ENCODE measurements at regions of chr2 and their contacts with region 1.

Region 1: GRCh38 chr2:190648289-190649034 is 421 bp upstream of the NAB1 start:
- DNase-seq: peak; percentile 79
- H3K4me3 ChIP-seq: peak overlapping the region; percentile 87 to 97
- H3K27ac ChIP-seq: peak overlapping the region; percentile 86
- H3K4me1 ChIP-seq: peaks cover 6% of the 10 kb centered on the region
- H3K27me3 ChIP-seq: no peaks in the 10 kb centered on the region
- CTCF ChIP-seq: no peak
- POLR2A ChIP-seq: peak; percentile 45

Region 2: GRCh38 chr2:190173392-190173791 is 475.1 kb before region 1 on chr2:
- intact Hi-C with region 1: no loop called
- DNase-seq: no peak
- H3K4me3 ChIP-seq: no peak overlapping the region
- H3K27ac ChIP-seq: no peak overlapping the region
- H3K4me1 ChIP-seq: no peaks in the 10 kb centered on the region
- H3K27me3 ChIP-seq: no peaks in the 10 kb centered on the region
- CTCF ChIP-seq: no peak
- POLR2A ChIP-seq: no peak

Region 3: DNA sequence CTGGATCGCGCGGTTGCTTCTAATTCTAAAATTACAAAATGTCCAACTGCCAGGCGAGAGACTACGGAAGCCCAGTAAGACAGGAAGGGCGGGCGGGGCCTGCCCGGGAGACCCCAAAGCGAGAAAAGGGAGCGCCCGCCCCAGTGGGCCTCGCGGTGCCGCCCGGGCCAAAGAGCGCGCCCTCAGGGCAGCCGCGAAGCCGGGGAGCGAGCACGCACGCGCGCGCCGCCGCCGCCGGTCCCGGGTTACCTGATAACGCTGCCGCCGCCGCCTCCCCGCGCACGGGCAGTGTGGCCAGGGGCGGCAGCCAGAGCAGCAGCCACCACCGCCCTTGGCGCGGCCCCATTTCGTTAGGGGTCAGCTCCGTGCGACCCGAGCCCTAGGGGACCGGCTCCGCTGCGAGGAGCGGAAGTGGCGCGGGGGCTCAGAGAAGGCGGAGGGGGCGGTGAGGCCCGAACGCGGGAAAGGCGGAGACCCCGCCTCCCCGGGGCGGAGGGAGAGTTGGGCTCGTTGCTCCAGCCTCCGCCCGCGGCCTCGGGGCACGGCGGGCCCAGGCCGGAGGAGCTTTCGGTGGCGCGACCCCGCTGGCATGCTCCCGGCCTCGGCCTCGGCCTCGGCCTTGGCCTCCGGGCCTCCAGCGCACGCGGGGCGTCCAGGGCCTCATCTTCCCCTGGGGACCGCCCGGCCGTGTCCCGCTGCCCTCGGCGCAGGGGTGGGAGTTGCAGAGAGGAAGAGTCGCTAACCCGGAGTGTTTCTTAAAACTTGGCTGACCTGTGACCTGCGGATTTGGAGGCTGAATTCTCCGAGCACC is 113.9 kb before region 1 on chr2 and contains the start of gene NEMP2:
- intact Hi-C with region 1: loop called (anchors 2 kb)
- DNase-seq: peak; percentile 54
- H3K4me3 ChIP-seq: peak within 1 kb of the TSS; percentile 72 to 76
- H3K27ac ChIP-seq: peak within 1 kb of the TSS; percentile 90 to 94
- H3K4me1 ChIP-seq: no peaks in the 10 kb centered on the region
- H3K27me3 ChIP-seq: no peaks in the 10 kb centered on the region
- CTCF ChIP-seq: no peak
- POLR2A ChIP-seq: peak; percentile 54
- total RNA-seq, gene NEMP2: 4.6 to 14.0 TPM

Measured in prostate gland (tissue), 2 donors.